ENCODE measurements at regions of chr2 and their contacts with region 1.

Region 1: DNA sequence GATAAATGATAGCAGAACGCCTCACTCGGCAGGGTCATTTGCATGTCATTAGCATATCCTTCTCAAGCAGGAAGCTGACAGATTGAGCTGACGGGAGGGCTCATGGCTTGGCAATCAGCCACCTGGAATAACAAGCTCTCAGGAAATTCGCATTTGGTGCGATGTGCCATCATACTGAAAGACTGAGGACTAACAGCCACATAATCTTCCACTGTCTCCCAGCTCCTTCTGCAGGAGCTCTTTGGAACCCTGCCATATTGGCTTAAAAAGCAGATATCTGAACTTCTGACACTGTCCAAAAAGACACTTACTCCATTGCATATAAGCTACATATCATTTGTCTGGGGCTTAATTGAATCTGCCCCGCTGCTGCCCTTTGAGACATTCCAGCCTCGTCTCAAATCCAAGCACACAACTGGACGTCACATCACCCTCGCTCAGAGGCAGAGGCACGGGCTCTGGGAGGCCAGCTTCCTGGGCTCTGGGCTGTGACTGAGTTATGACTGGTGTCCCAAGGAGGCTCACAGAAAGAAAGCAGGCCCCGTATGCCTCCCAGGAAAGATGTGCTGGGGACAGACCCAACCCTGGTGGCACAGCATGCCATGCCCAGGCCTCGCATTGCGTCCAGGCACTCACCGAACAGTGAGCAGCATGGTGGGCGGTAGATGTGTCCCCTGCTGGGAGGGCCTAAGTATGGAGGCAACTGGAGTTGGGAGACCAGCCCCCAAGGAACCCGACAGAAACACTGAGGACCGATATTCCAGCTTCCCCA is 228.0 kb downstream of the ATAD2B start:
- DNase-seq: peak; percentile 20
- H3K4me3 ChIP-seq: no peak overlapping the region
- CTCF ChIP-seq: no peak

Region 2: DNA sequence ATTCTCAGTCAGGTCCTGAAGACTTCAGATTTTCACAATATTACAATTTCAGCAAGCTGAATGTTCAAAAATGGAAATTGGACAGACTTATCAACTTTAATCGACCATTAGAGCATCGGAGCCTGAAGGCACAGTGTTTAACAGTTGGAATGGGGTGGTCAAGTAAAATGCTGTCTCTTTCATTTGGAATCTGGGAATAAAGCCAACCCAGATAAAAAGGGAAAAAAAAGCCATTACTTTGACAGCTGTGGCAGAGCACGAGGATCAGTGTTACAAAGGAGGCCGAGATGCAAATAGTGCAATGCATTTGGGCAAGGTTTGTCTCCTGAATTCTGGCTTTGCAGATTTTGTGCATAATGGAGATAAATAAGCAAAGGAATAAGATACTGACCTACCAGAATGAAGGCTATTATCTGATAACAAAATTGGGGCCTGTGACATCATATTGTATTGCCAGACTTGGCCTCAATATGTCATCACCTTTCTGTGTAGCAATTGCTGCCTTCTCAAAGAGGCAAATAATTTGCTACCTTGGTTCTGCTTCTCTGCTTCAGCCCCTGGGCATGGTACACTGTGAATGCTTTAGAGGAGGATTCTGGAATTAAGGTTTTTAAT is 591.5 kb before region 1 on chr2:
- in situ Hi-C with region 1: no loop called
- DNase-seq: no peak
- H3K4me3 ChIP-seq: no peak overlapping the region
- CTCF ChIP-seq: no peak

Region 3: GRCh38 chr2:23757686-23758433 is 59.0 kb after region 1 on chr2:
- in situ Hi-C with region 1: loop called (anchors 5 kb)
- DNase-seq: peak; percentile 52
- H3K4me3 ChIP-seq: no peak overlapping the region
- CTCF ChIP-seq: no peak

Region 4: DNA sequence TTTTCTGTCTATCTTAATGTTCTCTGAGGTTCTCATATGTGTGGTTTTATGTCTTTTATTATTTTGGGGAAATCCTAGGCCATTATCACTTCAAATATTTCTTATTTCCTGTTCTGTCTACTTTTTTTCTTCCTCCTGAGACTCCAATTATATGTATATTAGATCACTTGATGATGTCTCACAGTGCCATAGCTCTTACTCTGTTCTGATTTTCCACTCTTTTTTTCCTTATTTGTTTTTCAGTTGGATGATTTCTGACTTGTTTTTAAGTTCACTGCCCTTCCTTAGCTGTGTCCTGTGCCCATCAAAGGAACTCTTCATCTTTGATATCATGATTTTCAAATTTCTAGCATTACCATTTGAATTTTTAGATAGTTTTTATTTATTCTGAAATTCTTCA is 448.5 kb after region 1 on chr2:
- in situ Hi-C with region 1: no loop called
- DNase-seq: no peak
- H3K4me3 ChIP-seq: no peak overlapping the region
- CTCF ChIP-seq: no peak

Measured in astrocyte of the cerebellum (primary cell).